ENCODE measurements at regions of chr1 and their contacts with region 1.

Region 1: DNA sequence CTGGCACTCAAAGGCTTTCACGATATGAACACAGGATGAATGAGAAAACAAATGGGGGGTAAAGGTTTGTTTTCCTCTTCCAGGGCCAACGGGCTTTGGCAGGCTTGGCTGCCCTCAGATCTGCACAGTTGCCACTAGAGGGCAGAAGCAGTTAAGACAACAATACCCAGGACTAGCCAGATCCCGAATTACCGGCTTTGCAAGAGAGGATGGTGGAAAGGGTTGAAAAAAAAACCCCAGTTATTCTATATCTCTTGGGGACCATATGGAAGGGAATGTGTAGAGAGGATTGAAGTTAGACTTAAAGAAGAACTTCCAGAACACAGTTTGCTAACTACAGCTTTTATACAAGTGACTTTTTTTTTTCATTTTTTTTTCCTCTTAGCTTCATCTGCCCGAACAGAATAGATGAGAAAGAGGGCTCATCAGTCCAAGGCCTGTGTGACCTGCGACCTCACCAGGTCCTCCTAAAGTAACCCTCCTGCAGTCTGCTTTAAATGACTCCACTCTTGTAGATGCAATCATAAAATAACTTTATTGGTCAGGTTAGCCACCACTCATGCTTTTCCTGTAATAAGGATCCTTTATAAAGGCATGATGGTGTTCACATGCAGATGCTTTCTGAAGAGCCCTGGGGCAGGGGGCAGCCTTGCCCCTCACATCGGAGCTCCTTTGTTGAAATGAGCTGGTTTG is 10.7 kb downstream of the FMOD start:
- DNase-seq: peak; percentile 92
- H3K4me3 Mint-ChIP-seq: no peak overlapping the region
- H3K27ac Mint-ChIP-seq: no peak overlapping the region
- H3K4me1 Mint-ChIP-seq: peaks cover 6% of the 10 kb centered on the region
- H3K27me3 Mint-ChIP-seq: peaks cover 56% of the 10 kb centered on the region
- CTCF ChIP-seq: peak; percentile 95

Region 2: DNA sequence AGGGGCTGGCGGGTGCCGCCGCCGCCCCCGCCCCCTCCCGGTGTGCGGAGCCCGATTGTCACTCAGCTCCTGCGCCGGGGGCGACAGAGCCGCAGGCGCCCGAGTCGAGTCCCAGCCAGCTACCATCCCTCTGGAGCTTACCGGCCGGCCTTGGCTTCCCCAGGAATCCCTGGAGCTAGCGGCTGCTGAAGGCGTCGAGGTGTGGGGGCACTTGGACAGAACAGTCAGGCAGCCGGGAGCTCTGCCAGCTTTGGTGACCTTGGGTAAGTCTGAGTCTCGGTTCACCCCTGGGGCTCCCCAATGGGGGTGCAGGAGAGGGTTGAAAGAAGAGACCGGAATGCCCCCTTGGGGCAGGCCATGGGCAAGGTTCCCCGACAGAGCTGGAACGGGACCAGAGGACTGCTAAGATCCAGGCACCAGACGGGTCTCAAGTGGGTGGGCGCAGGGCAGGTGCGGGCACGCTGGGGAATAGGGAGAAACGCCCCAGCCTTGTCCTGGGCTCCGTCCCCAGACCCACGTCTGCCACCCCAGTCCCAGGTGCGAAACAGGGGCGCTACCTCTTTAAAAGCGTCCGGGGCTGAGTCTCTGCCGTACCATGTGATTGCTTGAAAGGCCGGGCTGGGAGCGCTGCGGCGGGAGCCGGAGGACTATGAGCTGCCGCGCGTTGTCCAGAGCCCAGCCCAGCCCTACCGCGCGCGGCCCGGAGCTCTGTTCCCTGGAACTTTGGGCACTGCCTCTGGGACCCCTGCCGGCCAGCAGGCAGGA is 212.4 kb before region 1 on chr1 and contains the start of gene ADORA1:
- CTCF ChIA-PET with region 1: no interaction called
- POLR2A ChIA-PET with region 1: no interaction called
- intact Hi-C with region 1: no loop called
- DNase-seq: peak; percentile 87
- H3K4me3 Mint-ChIP-seq: peak within 1 kb of the TSS; percentile 72
- H3K27ac Mint-ChIP-seq: peak within 1 kb of the TSS; percentile 21
- H3K4me1 Mint-ChIP-seq: peaks cover 18% of the 10 kb centered on the region
- H3K27me3 Mint-ChIP-seq: peaks cover 13% of the 10 kb centered on the region
- CTCF ChIP-seq: no peak
- total RNA-seq, gene ADORA1: 0.26 and 0.34 TPM in 2 replicates

Region 3: GRCh38 chr1:203148125-203148524 is 192.1 kb before region 1 on chr1:
- CTCF ChIA-PET with region 1: no interaction called
- POLR2A ChIA-PET with region 1: no interaction called
- intact Hi-C with region 1: no loop called
- DNase-seq: peak; percentile 68
- H3K4me3 Mint-ChIP-seq: no peak overlapping the region
- H3K27ac Mint-ChIP-seq: no peak overlapping the region
- H3K4me1 Mint-ChIP-seq: peaks cover 16% of the 10 kb centered on the region
- H3K27me3 Mint-ChIP-seq: no peaks in the 10 kb centered on the region
- CTCF ChIP-seq: peak; percentile 70

Region 4: DNA sequence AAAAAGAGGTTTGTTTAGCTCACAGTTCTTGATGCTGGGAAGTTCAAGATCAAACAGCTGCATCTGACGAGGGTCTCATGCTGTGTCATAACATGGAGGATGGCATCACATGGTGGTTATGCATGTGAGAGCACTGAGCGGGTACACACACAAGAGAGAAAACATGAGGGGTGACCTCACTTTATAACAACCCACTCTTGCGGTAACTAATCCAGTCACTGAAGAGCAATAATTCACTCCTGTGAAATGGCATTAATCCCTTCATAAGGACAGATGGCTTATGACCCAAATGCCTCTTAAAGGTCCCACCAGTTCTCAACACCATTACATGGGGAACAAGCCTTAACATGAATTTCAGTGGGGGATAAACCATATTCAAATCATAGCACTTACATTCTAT is 87.6 kb before region 1 on chr1:
- CTCF ChIA-PET with region 1: interaction called, 17 read pairs
- POLR2A ChIA-PET with region 1: interaction called, 3 read pairs
- intact Hi-C with region 1: no loop called
- DNase-seq: no peak
- H3K4me3 Mint-ChIP-seq: no peak overlapping the region
- H3K27ac Mint-ChIP-seq: no peak overlapping the region
- H3K4me1 Mint-ChIP-seq: peaks cover 7% of the 10 kb centered on the region
- H3K27me3 Mint-ChIP-seq: peaks cover 79% of the 10 kb centered on the region
- CTCF ChIP-seq: no peak

Region 5: GRCh38 chr1:203320591-203321272 is 19.5 kb before region 1 on chr1:
- CTCF ChIA-PET with region 1: interaction called, 154 read pairs
- POLR2A ChIA-PET with region 1: interaction called, 3 read pairs
- intact Hi-C with region 1: no loop called
- DNase-seq: peak; percentile 51
- H3K4me3 Mint-ChIP-seq: no peak overlapping the region
- H3K27ac Mint-ChIP-seq: no peak overlapping the region
- H3K4me1 Mint-ChIP-seq: peaks cover 20% of the 10 kb centered on the region
- H3K27me3 Mint-ChIP-seq: peaks cover 49% of the 10 kb centered on the region
- CTCF ChIP-seq: no peak

Region 6: DNA sequence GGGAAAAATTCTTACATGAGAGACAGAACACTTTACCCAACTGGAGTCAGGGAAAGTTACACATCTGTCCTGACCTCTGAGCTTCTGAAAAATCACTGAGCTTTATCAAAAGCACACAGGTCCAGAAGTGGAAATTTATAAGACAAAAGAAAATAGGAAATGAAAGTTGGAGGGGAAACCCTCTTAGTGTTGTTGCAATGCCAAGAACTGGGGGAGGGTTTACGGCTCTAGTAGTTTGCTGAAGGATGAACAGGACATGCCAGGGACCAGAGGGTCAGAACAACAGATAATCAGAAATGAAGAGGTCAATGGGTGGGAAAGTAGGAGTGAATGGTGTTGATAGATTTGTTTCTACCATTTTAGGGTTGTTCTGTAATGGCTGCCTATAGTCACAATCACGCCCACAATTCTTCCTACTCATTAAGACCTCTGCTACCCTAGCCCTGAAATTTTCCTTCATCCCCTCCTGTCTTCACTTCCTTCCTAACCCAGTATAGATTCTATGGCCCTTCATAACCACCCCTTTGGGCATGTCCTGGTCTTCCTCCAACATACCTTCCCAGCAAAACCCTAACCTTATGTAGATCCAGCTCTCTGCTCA is 41.0 kb after region 1 on chr1:
- CTCF ChIA-PET with region 1: interaction called, 13 read pairs
- POLR2A ChIA-PET with region 1: no interaction called
- intact Hi-C with region 1: no loop called
- DNase-seq: no peak
- H3K4me3 Mint-ChIP-seq: no peak overlapping the region
- H3K27ac Mint-ChIP-seq: no peak overlapping the region
- H3K4me1 Mint-ChIP-seq: no peaks in the 10 kb centered on the region
- H3K27me3 Mint-ChIP-seq: peaks cover 76% of the 10 kb centered on the region
- CTCF ChIP-seq: no peak

Region 7: DNA sequence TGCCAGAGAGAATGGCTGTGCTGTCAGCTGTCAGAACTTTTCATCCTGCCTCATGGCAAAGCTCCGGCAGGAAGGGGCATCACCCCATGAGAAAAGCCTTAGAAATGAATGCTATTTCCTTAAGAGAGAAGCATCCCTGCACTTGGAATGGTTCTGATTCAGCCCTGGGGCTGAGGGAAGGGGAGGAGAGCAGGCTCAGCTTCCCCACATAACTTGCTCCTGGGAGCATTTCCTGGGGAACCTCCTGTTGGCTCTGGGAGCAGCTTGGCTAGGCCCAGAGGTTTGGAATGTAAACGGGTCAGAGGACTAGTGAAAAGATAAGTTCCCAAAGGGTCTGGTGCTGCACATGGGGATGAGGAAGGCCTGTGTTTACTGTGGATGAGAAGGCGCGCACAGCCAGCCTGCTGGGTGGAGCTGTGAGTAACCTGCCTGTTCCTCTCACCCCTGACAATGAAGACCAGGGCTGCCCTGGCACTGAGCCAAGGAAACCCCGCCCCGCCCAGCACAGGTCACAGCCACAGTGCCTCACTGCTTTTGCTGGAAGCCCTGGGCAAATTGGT is 140.3 kb after region 1 on chr1:
- CTCF ChIA-PET with region 1: interaction called, 981 read pairs
- POLR2A ChIA-PET with region 1: interaction called, 5 read pairs
- intact Hi-C with region 1: no loop called
- DNase-seq: peak; percentile 92
- H3K4me3 Mint-ChIP-seq: no peak overlapping the region
- H3K27ac Mint-ChIP-seq: no peak overlapping the region
- H3K4me1 Mint-ChIP-seq: peaks cover 20% of the 10 kb centered on the region
- H3K27me3 Mint-ChIP-seq: peaks cover 21% of the 10 kb centered on the region
- CTCF ChIP-seq: no peak

Region 8: GRCh38 chr1:203702130-203702577 is 361.9 kb after region 1 on chr1:
- CTCF ChIA-PET with region 1: interaction called, 72 read pairs
- POLR2A ChIA-PET with region 1: interaction called, 3 read pairs
- intact Hi-C with region 1: loop called (anchors 1 kb)
- DNase-seq: peak; percentile 83
- H3K4me3 Mint-ChIP-seq: no peak overlapping the region
- H3K27ac Mint-ChIP-seq: no peak overlapping the region
- H3K4me1 Mint-ChIP-seq: peaks cover 16% of the 10 kb centered on the region
- H3K27me3 Mint-ChIP-seq: no peaks in the 10 kb centered on the region
- CTCF ChIP-seq: peak; percentile 100